Posterior vena cava (tissue), 2 donors: ENCODE measurements at regions of chr2 and their contacts with region 1.

Region 1: GRCh38 chr2:42828487-42829425 is 36.4 kb upstream of the HAAO start:
- DNase-seq: peak; percentile 93

Region 2: GRCh38 chr2:42801381-42801780 is 27.4 kb before region 1 on chr2:
- intact Hi-C with region 1: loop called in 1 of 2 experiments (anchors 1 kb)
- DNase-seq: no peak

Region 3: GRCh38 chr2:42878581-42878980 is 49.8 kb after region 1 on chr2:
- intact Hi-C with region 1: no loop called
- DNase-seq: no peak

Region 4: DNA sequence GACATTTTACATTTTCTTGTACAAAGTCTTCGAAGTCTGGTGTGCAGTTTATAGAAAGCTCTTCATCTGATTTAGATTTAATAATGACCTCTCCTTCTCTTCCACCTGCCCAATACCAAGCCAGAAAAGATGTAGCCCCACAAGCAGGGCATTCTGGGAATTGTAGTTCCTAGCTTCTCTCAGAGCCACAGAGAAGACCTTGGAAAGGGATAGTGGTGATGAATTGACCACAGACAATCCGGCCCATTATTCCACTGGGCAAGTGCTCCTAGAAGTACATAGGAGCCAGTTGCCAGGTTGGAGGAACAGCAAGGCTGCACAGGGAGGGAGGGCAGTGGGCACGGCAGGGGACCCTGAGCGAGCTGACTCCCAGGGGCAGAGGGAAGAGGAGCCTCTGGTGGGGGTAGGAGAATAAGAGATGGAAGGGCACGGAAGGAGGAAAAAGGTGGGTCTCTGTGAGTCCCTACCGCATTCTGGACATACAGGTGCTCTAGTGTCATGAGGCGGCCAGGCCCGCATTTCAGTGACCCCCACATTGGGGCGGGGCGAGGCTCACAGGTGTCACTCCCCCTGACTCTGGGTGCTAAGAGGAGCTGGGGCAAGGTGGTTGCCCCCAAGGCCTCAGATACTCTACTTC is 116.1 kb after region 1 on chr2:
- intact Hi-C with region 1: loop called in 1 of 2 experiments (anchors 5 kb)
- DNase-seq: no peak

Region 5: GRCh38 chr2:43226558-43226954 is 397.8 kb after region 1 on chr2 and contains the start of gene ZFP36L2:
- intact Hi-C with region 1: loop called in 1 of 2 experiments (anchors 5 kb)
- DNase-seq: peak; percentile 99
- total RNA-seq, gene ZFP36L2: 123 to 148 TPM

Region 6: GRCh38 chr2:43576981-43577892 is 748.5 kb after region 1 on chr2:
- intact Hi-C with region 1: loop called in 1 of 2 experiments (anchors 10 kb)
- DNase-seq: no peak